ENCODE measurements at regions of chr11 and their contacts with region 1.

Region 1: DNA sequence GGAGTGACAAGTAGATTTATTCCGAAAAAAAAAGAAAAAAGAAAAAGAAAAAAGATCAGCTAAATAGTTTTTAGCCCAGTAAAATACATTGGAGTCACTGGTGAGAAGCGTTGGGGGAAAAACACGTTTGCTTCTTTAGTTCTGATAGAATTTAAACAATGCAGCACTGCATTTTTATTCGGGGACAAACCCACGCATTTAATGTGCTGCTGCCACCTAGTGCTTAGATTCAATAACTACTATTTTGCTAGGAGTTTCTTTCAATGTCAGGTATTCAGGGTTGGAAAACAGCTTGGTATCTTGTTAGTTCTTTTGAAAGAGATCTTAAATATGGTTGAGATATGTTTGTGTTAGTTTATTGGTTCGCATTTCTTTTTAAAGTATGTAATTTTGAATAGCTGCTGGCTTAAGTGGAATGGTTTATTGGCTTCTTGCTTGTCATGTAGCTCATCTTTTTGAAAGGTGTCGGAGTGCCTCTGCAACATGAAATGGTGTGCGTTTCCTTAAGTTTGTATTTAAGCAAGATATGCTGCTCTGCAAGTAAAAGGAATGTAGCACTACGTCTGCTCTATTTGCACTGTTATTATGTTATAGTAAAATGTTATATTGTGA is 41.9 kb downstream of the SVIP start:
- DNase-seq: no peak
- ATAC-seq: peak in 1 of 4 donors; percentile 56
- H3K4me3 ChIP-seq: no peak overlapping the region
- H3K27ac ChIP-seq: no peak overlapping the region
- H3K4me1 ChIP-seq: peaks cover 0 to 11% (median 0%) of the 10 kb centered on the region in 12 donors
- H3K27me3 ChIP-seq: no peaks in the 10 kb centered on the region
- CTCF ChIP-seq: peak; percentile 63 to 80 (median 72)
- POLR2A ChIP-seq: no peak

Region 2: DNA sequence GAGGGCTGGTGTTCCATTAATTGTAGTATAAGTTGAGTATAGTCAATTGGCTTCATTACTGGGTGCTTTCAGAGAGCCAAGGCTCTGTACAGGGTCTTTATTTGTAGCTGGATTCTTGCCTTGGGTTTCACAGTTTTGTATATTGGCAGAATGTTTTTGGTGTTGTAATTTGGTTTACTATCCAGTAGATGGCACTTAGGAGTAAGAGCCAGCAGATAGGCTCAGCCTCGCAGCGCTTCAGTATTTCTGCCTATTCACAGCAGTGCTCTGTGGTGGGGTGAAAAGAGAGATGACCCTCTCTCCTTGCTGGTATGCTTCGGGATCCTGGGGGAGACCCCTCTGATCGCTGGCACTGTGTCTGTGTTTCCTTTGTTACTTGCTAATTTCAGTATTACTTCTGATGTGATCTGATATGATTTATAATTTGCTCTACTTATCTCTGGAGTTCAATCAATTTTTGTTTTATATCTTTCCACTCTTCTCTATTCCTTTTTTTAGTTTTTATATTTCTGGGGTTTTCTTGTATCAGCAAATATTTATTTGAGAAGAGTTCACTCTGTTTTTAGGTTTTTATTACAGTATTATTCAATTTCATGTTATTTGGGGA is 542.6 kb before region 1 on chr11:
- intact Hi-C with region 1: loop called in 1 of 10 experiments (anchors 10 kb)
- DNase-seq: peak in 2 of 5 donors; percentile 26
- ATAC-seq: peak in 3 of 4 donors; percentile 69 to 80 (median 76)
- H3K4me3 ChIP-seq: no peak overlapping the region
- H3K27ac ChIP-seq: no peak overlapping the region
- H3K4me1 ChIP-seq: peaks cover 0 to 4% (median 0%) of the 10 kb centered on the region in 12 donors
- H3K27me3 ChIP-seq: no peaks in the 10 kb centered on the region
- CTCF ChIP-seq: peak; percentile 38 to 73 (median 53)
- POLR2A ChIP-seq: no peak

Region 3: GRCh38 chr11:22331771-22332170 is 455.9 kb before region 1 on chr11:
- intact Hi-C with region 1: loop called (anchors 2 to 5 kb)
- DNase-seq: no peak
- ATAC-seq: no peak
- H3K4me3 ChIP-seq: no peak overlapping the region
- H3K27ac ChIP-seq: no peak overlapping the region
- H3K4me1 ChIP-seq: no peaks in the 10 kb centered on the region
- H3K27me3 ChIP-seq: peaks cover 0 to 19% (median 2%) of the 10 kb centered on the region in 9 donors
- CTCF ChIP-seq: peak in 1 of 12 donors; percentile 10
- POLR2A ChIP-seq: no peak

Region 4: DNA sequence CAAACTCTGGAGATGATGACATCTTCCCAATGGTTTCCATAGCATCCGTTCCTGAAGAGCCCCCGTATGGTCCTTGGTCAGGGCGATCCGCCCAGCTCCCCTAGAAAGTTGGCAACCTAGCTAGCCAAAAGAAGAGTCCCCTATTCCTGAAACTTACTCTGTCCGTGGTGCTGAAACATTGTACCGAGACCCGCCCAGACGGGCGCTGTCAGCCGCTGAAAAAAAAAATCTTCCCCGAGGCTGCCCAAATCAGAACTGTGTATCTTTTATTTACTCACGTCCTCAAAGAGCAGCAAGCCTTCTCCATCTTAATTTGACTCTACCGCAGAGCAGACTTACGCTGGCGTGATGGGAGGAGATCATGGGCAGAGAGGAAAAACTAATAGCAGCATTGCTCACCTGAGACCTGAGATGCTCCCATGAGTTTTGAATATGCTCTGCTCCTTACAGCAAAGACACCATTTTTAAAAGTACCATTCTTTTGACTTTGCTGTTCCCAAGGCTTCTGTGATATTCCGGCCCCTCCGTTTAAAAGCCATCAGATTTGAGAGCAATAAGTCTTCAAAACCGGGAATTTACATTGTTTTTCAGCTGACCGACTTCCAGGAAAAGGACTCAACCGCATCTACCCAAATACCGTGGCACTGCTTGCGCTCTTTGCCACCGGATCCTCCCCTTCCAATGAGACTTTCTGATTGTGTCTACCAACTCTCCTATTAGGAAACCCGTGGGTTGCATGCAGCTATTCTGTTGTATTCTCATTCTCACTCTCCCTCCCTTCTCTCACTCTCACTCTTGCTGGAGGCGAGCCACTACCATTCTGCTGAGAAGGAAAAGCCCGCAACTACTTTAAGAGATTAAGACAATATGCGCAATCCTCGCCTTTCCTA is 449.8 kb before region 1 on chr11 and contains the start of gene SLC17A6:
- intact Hi-C with region 1: loop called (anchors 2 to 5 kb)
- DNase-seq: no peak
- ATAC-seq: peak in 1 of 4 donors; percentile 42
- H3K4me3 ChIP-seq: no peak within 1 kb of the TSS
- H3K27ac ChIP-seq: no peak within 1 kb of the TSS
- H3K4me1 ChIP-seq: peaks cover 0 to 11% (median 0%) of the 10 kb centered on the region in 12 donors
- H3K27me3 ChIP-seq: peaks cover 15 to 66% (median 57%) of the 10 kb centered on the region in 9 donors
- CTCF ChIP-seq: no peak
- POLR2A ChIP-seq: no peak
- total RNA-seq, gene SLC17A6: not detected

Region 5: GRCh38 chr11:22426915-22427314 is 360.7 kb before region 1 on chr11:
- intact Hi-C with region 1: loop called in 1 of 10 experiments (anchors 5 kb)
- DNase-seq: no peak
- ATAC-seq: no peak
- H3K4me3 ChIP-seq: no peak overlapping the region
- H3K27ac ChIP-seq: no peak overlapping the region
- H3K4me1 ChIP-seq: peaks cover 0 to under 1% (median 0%) of the 10 kb centered on the region in 12 donors
- H3K27me3 ChIP-seq: no peaks in the 10 kb centered on the region
- CTCF ChIP-seq: peak in 4 of 12 donors; percentile 11 to 22 (median 15)
- POLR2A ChIP-seq: no peak

Region 6: DNA sequence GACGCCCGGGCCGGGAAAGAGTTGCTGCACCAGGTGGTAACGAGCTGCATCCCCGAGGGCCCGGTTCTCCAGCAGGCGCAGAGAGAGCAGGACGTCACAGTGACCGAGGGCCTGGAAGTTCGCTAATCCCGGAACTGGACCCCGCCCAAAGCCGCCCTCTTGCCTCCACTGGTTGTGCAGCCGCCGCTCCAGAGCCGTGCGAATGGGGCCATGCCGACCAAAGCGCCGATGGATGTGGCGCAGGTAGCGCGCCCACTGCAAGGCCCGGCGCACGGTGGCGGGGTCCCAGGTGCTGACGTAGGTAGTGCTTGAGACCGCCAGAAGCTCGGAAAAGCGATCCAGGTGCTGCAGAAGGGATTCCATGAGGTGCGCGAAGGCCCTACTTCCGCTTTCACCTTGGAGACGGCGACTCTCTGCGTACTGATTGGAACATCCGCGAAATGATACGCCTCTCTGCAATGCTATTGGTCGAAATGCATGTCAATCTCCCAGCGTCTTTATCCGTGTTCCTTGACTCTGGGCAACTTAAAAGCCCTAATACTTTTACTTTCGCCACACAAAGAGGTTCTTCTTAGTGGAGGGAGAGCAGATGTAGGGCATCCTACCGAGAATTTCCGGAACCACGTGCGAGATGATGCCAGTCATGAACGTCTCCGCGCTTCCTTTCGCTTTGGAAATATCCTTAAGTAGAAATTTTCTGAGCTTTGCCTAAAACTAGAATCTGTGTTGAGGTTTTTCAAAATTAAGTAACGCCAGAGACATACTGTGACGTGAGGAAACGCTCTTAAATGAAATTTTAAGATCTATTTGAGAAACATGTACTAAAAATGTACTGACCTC is 162.0 kb before region 1 on chr11 and contains the start of gene FANCF:
- intact Hi-C with region 1: loop called in 3 of 10 experiments (anchors 10 kb)
- DNase-seq: peak; percentile 91 to 96 (median 95)
- ATAC-seq: peak; percentile 98 to 99 (median 99)
- H3K4me3 ChIP-seq: peak within 1 kb of the TSS; percentile 59 to 95 (median 80)
- H3K27ac ChIP-seq: peak within 1 kb of the TSS; percentile 59 to 97 (median 89)
- H3K4me1 ChIP-seq: peaks cover 0 to 19% (median 12%) of the 10 kb centered on the region in 12 donors
- H3K27me3 ChIP-seq: no peaks in the 10 kb centered on the region
- CTCF ChIP-seq: no peak
- POLR2A ChIP-seq: peak in 1 of 2 donors; percentile 49
- total RNA-seq, gene FANCF: 4.6 to 8.6 (median 6.2) TPM

Region 7: GRCh38 chr11:22666688-22667439 is 120.8 kb before region 1 on chr11:
- intact Hi-C with region 1: loop called in 1 of 10 experiments (anchors 5 kb)
- DNase-seq: peak; percentile 49 to 79 (median 76)
- ATAC-seq: peak; percentile 68 to 95 (median 88)
- H3K4me3 ChIP-seq: peak overlapping the region; percentile 32 to 66 (median 58)
- H3K27ac ChIP-seq: peak overlapping the region; percentile 63 to 91 (median 79)
- H3K4me1 ChIP-seq: peaks cover 0 to 12% (median 0%) of the 10 kb centered on the region in 12 donors
- H3K27me3 ChIP-seq: peaks cover 0 to 32% (median 0%) of the 10 kb centered on the region in 9 donors
- CTCF ChIP-seq: peak in 4 of 12 donors; percentile 14 to 29 (median 19)
- POLR2A ChIP-seq: no peak

Region 8: GRCh38 chr11:22728600-22729389 is 58.9 kb before region 1 on chr11:
- intact Hi-C with region 1: no loop called
- DNase-seq: no peak
- ATAC-seq: no peak
- H3K4me3 ChIP-seq: no peak overlapping the region
- H3K27ac ChIP-seq: no peak overlapping the region
- H3K4me1 ChIP-seq: peaks cover 0 to 16% (median 0%) of the 10 kb centered on the region in 12 donors
- H3K27me3 ChIP-seq: no peaks in the 10 kb centered on the region
- CTCF ChIP-seq: no peak
- POLR2A ChIP-seq: no peak

Region 9: DNA sequence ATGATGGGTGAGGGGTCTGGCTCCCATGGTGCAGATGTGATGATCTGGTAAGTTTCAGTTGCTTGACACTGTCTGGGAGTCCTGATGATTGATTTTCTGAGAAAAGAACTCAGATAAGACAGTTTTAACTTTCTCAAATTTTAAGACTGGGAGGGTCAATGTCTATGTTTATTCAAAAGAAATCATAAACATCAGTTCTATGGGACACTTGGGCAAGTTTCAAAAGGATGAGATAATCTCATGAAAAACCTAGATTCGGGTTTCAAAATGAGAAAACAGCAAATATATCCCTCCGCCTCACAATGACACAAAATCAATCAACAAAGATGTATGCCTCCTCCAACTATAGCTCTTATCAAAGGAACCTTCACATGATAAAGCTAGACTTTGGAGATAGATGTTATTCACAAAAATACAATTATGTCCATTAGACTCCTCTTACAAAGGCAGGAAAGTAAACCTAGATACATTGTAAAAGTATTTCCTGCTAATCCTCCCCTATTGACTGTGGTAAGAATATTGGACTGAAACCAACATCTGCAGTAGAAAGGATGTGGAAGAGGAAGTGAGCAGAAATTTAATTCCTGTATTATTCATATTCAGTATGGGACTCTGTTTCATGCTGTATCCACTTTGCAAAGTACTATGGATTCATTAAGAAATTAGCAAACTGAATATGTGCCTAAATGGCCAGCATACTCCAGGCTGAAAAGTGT is 20.4 kb after region 1 on chr11:
- intact Hi-C with region 1: no loop called
- DNase-seq: no peak
- ATAC-seq: peak in 2 of 4 donors; percentile 59 to 91
- H3K4me3 ChIP-seq: no peak overlapping the region
- H3K27ac ChIP-seq: peak overlapping the region in 10 of 12 donors; percentile 12 to 66 (median 54)
- H3K4me1 ChIP-seq: peaks cover 0 to 25% (median 17%) of the 10 kb centered on the region in 12 donors
- H3K27me3 ChIP-seq: no peaks in the 10 kb centered on the region
- CTCF ChIP-seq: no peak
- POLR2A ChIP-seq: no peak

Measured in heart left ventricle (tissue), 16 donors.